Endothelial cell of umbilical vein (primary cell): ENCODE measurements at regions of chr7 and their contacts with region 1.

Region 1: DNA sequence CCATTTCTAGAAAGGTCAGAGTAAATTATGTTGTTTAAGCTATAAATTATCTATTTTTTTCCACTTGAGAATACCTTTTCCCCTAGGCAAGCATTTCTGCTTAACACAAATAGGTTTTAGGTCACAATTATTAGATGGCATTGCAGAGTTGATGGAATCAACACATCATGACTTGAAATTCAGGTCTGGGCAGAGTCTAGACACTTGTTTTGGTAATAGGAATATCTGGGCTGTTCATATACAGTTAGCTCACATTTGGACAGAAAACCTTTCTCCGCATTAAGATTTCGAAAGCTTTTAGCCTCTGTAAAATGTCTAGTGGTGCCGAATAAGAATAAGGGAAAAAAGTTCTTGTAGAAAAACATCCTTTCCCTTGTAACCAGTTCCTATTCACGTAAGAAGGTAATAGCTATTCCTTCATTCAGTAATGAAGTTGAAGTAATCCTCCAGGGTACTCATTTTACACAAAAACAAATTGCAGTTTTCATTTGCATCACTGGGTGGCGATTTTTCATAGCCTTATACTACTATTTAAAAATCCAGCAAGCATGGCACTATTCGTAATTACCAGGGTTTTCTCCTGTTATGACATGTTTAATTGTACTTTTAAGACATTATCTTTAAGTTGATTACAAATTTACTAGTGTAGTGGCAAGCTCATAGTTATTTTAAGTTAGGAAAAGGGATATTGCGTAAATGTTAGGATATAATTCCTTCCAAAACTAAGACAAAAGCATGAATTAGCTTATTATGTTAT is 37.0 kb downstream of the RPA3 start:
- DNase-seq: peak; percentile 88
- H3K4me3 ChIP-seq: no peak overlapping the region
- H3K27ac ChIP-seq: no peak overlapping the region
- H3K4me1 ChIP-seq: no peaks in the 10 kb centered on the region
- H3K27me3 ChIP-seq: no peaks in the 10 kb centered on the region
- CTCF ChIP-seq: peak; percentile 32 to 38
- POLR2A ChIP-seq: no peak

Region 2: GRCh38 chr7:7668706-7669105 is 12.7 kb before region 1 on chr7:
- CTCF ChIA-PET with region 1: interaction called, 15 read pairs
- POLR2A ChIA-PET with region 1: no interaction called
- dilution Hi-C with region 1: no loop called
- intact Hi-C with region 1: no loop called
- DNase-seq: no peak
- H3K4me3 ChIP-seq: no peak overlapping the region
- H3K27ac ChIP-seq: no peak overlapping the region
- H3K4me1 ChIP-seq: peaks cover 5% of the 10 kb centered on the region
- H3K27me3 ChIP-seq: no peaks in the 10 kb centered on the region
- CTCF ChIP-seq: no peak
- POLR2A ChIP-seq: no peak

Region 3: GRCh38 chr7:7713730-7714129 is 32.4 kb after region 1 on chr7:
- CTCF ChIA-PET with region 1: interaction called, 20 read pairs
- POLR2A ChIA-PET with region 1: no interaction called
- dilution Hi-C with region 1: no loop called
- intact Hi-C with region 1: no loop called
- DNase-seq: no peak
- H3K4me3 ChIP-seq: no peak overlapping the region
- H3K27ac ChIP-seq: no peak overlapping the region
- H3K4me1 ChIP-seq: no peaks in the 10 kb centered on the region
- H3K27me3 ChIP-seq: no peaks in the 10 kb centered on the region
- CTCF ChIP-seq: no peak
- POLR2A ChIP-seq: no peak

Region 4: GRCh38 chr7:7739204-7740036 is 58.1 kb after region 1 on chr7:
- CTCF ChIA-PET with region 1: interaction called, 20 read pairs
- POLR2A ChIA-PET with region 1: no interaction called
- dilution Hi-C with region 1: no loop called
- intact Hi-C with region 1: no loop called
- DNase-seq: no peak
- H3K4me3 ChIP-seq: no peak overlapping the region
- H3K27ac ChIP-seq: no peak overlapping the region
- H3K4me1 ChIP-seq: peaks cover 3% of the 10 kb centered on the region
- H3K27me3 ChIP-seq: no peaks in the 10 kb centered on the region
- CTCF ChIP-seq: no peak
- POLR2A ChIP-seq: no peak

Region 5: GRCh38 chr7:7761340-7761980 is 80.1 kb after region 1 on chr7:
- CTCF ChIA-PET with region 1: interaction called, 153 read pairs
- POLR2A ChIA-PET with region 1: no interaction called
- dilution Hi-C with region 1: no loop called
- intact Hi-C with region 1: loop called (anchors 1 kb)
- DNase-seq: peak; percentile 58
- H3K4me3 ChIP-seq: peak overlapping the region; percentile 5 to 58 (median 40)
- H3K27ac ChIP-seq: no peak overlapping the region
- H3K4me1 ChIP-seq: peaks cover 11% of the 10 kb centered on the region
- H3K27me3 ChIP-seq: no peaks in the 10 kb centered on the region
- CTCF ChIP-seq: peak in 1 of 2 donors; percentile 19
- POLR2A ChIP-seq: no peak

Region 6: GRCh38 chr7:8190119-8190895 is 508.9 kb after region 1 on chr7:
- CTCF ChIA-PET with region 1: interaction called, 83 read pairs
- POLR2A ChIA-PET with region 1: no interaction called
- dilution Hi-C with region 1: no loop called
- intact Hi-C with region 1: loop called (anchors 1 kb)
- DNase-seq: peak; percentile 65
- H3K4me3 ChIP-seq: no peak overlapping the region
- H3K27ac ChIP-seq: no peak overlapping the region
- H3K4me1 ChIP-seq: no peaks in the 10 kb centered on the region
- H3K27me3 ChIP-seq: no peaks in the 10 kb centered on the region
- CTCF ChIP-seq: peak; percentile 34 to 57
- POLR2A ChIP-seq: no peak